ENCODE measurements at regions of chr10 and their contacts with region 1.

Region 1: GRCh38 chr10:110610308-110610774 is 33.8 kb upstream of the RBM20 start:
- DNase-seq: peak in 2 of 5 donors; percentile 34 to 44
- ATAC-seq: peak; percentile 35 to 72 (median 64)
- H3K4me3 ChIP-seq: no peak overlapping the region
- H3K27ac ChIP-seq: peak overlapping the region in 8 of 12 donors; percentile 18 to 69 (median 36)
- H3K4me1 ChIP-seq: peaks cover 0 to 27% (median 0%) of the 10 kb centered on the region in 12 donors
- H3K27me3 ChIP-seq: no peaks in the 10 kb centered on the region
- CTCF ChIP-seq: peak; percentile 71 to 88 (median 80)
- POLR2A ChIP-seq: no peak

Region 2: GRCh38 chr10:110444004-110444337 is 166.4 kb before region 1 on chr10:
- intact Hi-C with region 1: no loop called
- DNase-seq: peak in 4 of 5 donors; percentile 39 to 82 (median 58)
- ATAC-seq: peak; percentile 75 to 94 (median 84)
- H3K4me3 ChIP-seq: no peak overlapping the region
- H3K27ac ChIP-seq: peak overlapping the region in 6 of 12 donors; percentile 7 to 46 (median 30)
- H3K4me1 ChIP-seq: peaks cover 0 to 17% (median 9%) of the 10 kb centered on the region in 12 donors
- H3K27me3 ChIP-seq: no peaks in the 10 kb centered on the region
- CTCF ChIP-seq: no peak
- POLR2A ChIP-seq: no peak

Region 3: DNA sequence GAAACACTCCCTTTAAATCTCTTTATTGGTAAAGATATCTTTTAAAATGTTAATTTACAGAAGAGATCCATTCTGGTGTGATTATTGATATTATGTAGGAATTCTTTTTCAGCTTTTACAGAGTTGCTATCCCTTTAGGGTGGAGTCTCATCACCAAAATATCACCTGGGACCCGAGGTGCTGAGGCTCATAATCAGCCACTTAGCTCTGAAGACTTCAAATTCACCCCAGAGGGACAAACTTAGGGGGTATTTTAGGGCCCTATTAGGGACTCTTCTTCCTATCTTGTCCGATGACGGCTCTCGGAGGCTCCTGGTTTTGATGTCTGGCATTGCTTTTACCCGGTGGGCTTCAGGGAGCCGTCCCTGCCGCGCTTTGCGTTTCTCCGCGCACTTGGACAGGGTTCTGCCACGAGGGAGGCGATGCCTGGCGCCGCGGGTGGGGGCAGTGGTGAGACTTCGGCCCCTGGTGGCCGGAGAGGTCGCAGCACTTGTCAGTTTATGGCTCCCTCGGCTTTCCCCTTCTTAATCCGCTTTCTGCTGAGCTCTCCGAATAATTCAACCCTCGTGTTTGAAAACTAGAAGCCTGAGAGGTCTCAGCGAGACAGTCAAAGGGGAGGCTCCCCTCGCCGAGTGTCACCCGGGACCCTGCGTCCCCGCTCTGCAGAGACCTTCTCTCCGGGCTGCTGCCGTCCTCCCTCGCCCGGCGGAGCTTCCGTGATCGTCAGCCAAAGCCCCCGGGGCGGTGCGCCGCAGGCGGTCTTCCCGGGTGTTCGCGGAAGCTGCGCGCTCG is 61.6 kb after region 1 on chr10:
- intact Hi-C with region 1: loop called in 6 of 10 experiments (anchors 2 to 5 kb)
- DNase-seq: peak; percentile 76 to 86 (median 82)
- ATAC-seq: peak; percentile 53 to 88 (median 82)
- H3K4me3 ChIP-seq: peak overlapping the region; percentile 32 to 80 (median 60)
- H3K27ac ChIP-seq: peak overlapping the region; percentile 69 to 97 (median 88)
- H3K4me1 ChIP-seq: peaks cover 0 to 80% (median 26%) of the 10 kb centered on the region in 12 donors
- H3K27me3 ChIP-seq: peaks cover 0 to 1% (median 0%) of the 10 kb centered on the region in 9 donors
- CTCF ChIP-seq: peak; percentile 66 to 97 (median 88)
- POLR2A ChIP-seq: peak in 1 of 2 donors; percentile 20

Region 4: DNA sequence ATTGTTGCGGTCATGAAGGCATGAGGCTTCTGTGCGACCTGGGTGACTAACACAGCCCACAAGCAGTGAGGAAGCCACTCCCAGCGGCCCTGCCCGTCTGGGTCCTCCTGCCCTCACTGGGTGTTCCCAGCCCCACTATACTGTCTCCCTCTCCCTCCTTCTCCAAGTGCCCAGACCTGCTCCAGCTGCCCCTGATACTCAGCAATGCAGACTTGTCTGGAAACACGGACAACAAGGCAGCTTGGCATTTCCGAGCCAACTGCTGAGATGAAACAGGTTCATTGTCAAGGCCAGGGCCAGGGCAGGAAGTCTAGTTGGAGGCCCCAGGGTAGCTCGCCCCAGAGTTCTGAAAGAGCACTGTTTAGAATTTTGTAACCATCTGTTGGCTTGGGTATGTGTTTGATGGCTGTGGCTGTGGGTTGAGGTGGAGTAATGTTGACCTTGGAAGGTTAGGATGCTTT is 129.5 kb after region 1 on chr10:
- intact Hi-C with region 1: loop called in 4 of 10 experiments (anchors 5 to 10 kb)
- DNase-seq: peak in 1 of 5 donors; percentile 55
- ATAC-seq: peak; percentile 23 to 75 (median 58)
- H3K4me3 ChIP-seq: no peak overlapping the region
- H3K27ac ChIP-seq: peak overlapping the region in 11 of 12 donors; percentile 57 to 90 (median 73)
- H3K4me1 ChIP-seq: peaks cover 2 to 92% (median 19%) of the 10 kb centered on the region in 12 donors
- H3K27me3 ChIP-seq: peaks cover 0 to 2% (median 0%) of the 10 kb centered on the region in 9 donors
- CTCF ChIP-seq: no peak
- POLR2A ChIP-seq: no peak

Region 5: GRCh38 chr10:110746254-110746826 is 136.0 kb after region 1 on chr10:
- intact Hi-C with region 1: loop called in 4 of 10 experiments (anchors 5 to 10 kb)
- DNase-seq: peak in 3 of 5 donors; percentile 55 to 59 (median 55)
- ATAC-seq: peak; percentile 32 to 60 (median 58)
- H3K4me3 ChIP-seq: no peak overlapping the region
- H3K27ac ChIP-seq: peak overlapping the region in 9 of 12 donors; percentile 15 to 86 (median 53)
- H3K4me1 ChIP-seq: peaks cover 2 to 72% (median 31%) of the 10 kb centered on the region in 12 donors
- H3K27me3 ChIP-seq: no peaks in the 10 kb centered on the region
- CTCF ChIP-seq: peak; percentile 66 to 88 (median 82)
- POLR2A ChIP-seq: no peak

Region 6: DNA sequence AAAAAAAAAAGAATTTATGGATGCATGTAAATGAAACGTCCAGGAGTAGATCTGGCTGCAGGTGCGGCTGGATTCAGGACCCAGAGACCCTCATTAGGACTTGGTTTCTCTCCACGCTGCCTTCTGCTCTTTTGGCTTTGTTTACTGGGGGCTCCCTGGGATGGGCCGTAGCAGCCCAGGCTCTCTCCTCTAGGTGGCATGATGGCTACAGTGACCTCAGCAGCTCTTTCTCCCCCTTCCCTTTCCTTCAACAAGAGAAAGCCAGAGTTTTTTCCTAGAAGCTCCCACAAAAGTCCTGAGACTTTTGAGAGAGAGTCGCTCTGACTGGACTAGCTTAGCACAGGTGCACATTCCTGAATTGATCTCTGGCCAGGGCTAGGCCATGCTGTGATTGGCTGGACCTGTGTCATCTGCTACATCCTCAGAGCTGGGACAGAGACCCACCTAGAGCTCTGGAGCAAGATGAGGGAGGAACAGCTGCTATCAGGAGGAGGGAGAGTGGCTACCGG is 193.5 kb after region 1 on chr10:
- intact Hi-C with region 1: loop called in 1 of 10 experiments (anchors 10 kb)
- DNase-seq: peak in 2 of 5 donors; percentile 53 to 55
- ATAC-seq: peak; percentile 44 to 66 (median 58)
- H3K4me3 ChIP-seq: no peak overlapping the region
- H3K27ac ChIP-seq: peak overlapping the region in 8 of 12 donors; percentile 14 to 68 (median 31)
- H3K4me1 ChIP-seq: peaks cover 0 to 42% (median 26%) of the 10 kb centered on the region in 12 donors
- H3K27me3 ChIP-seq: no peaks in the 10 kb centered on the region
- CTCF ChIP-seq: peak; percentile 36 to 74 (median 55)
- POLR2A ChIP-seq: no peak

Region 7: DNA sequence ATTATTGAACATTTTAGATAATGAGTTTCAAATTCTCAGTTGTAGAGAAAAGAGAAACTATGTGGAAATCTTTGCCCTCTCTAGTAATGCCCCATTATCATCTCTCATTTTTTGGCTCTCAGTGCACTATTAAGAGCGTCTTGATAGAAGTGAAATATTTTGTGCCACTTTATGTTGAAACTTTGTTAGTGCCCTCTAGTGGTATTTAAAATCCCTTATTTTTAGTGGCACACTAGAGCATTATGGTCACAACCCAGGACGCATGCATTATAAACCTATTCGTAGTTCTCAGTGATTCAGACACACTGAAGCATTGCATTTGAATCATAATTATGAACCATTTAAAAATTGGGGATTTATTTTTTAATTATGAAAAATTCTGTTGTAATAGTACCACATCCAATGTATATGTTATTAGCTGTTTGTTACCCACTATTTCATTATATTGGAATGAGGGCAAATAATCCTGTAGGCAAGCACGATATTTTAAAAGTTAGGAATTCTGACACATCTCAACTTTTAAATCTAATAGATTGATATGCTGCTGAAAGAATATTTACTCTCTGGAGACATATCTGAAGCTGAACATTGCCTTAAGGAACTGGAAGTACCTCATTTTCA is 283.3 kb after region 1 on chr10:
- intact Hi-C with region 1: loop called in 8 of 10 experiments (anchors 5 to 10 kb)
- DNase-seq: no peak
- ATAC-seq: peak; percentile 47 to 84 (median 77)
- H3K4me3 ChIP-seq: no peak overlapping the region
- H3K27ac ChIP-seq: peak overlapping the region in 1 of 12 donors; percentile 20
- H3K4me1 ChIP-seq: peaks cover 0 to 13% (median 4%) of the 10 kb centered on the region in 12 donors
- H3K27me3 ChIP-seq: no peaks in the 10 kb centered on the region
- CTCF ChIP-seq: peak; percentile 47 to 73 (median 66)
- POLR2A ChIP-seq: no peak

Measured in heart left ventricle (tissue), 16 donors.